ENCODE measurements at regions of chr7 and their contacts with region 1.

Region 1: DNA sequence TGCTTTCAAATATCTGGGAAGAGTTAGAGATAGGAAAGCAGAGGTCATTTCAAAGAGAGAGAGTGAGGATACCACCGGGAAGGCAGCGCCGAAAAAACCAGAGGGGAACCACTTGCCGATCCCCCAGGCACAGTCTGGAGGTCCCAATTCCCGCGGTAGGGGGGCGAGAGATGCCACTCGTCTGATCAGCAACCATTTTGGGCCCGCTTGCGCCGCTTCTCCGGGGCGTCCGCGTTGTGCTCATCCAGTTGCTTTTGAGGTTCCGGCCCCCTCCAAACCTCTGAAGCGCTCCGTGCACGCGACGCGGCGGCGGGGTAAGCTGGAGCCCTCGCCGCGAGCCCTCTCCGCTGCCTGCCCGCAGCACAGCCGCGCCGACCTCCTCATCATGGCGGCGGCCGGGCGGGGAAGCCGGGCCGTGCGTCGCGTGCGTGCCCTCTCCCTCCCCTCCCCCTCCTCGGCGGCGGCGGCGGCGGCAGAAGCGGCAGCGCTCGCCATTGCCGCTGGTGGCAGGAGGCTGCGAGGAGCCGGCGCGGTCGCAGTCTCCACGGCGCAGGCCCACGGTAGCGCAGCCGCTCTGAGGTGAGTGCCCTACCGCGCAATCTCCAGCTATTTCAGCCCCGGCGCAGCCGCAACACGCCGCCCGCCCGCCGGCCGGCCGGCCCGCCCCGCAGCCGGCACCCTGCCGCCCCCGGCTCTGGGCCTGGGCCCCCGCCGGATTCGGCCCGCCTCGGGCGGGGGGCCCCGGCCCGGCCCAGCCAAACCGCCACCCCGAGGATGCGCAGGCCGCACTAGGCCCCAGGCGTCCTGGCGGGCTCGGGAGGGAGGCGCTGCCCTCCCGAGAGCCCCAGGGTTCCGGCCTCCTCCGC is at the start of gene NRF1:
- DNase-seq: peak; percentile 88
- CTCF ChIP-seq: no peak

Region 2: GRCh38 chr7:129597672-129598071 is 13.8 kb before region 1 on chr7:
- CTCF ChIA-PET with region 1: interaction called, 13 read pairs
- POLR2A ChIA-PET with region 1: interaction called, 10 read pairs
- DNase-seq: no peak
- CTCF ChIP-seq: no peak

Region 3: GRCh38 chr7:129650056-129650758 is 38.7 kb after region 1 on chr7:
- CTCF ChIA-PET with region 1: interaction called, 11 read pairs
- POLR2A ChIA-PET with region 1: no interaction called
- DNase-seq: no peak
- CTCF ChIP-seq: no peak